Right ventricle myocardium superior (tissue), 1 donor: ENCODE measurements at regions of chr2 and their contacts with region 1.

Region 1: GRCh38 chr2:200703127-200703925 is 108.4 kb upstream of the BZW1 start:
- DNase-seq: no peak
- ATAC-seq: peak; percentile 66

Region 2: GRCh38 chr2:200156166-200156835 is 547.0 kb before region 1 on chr2:
- intact Hi-C with region 1: no loop called
- DNase-seq: peak; percentile 43
- ATAC-seq: peak; percentile 91

Region 3: GRCh38 chr2:200578778-200579177 is 124.5 kb before region 1 on chr2:
- intact Hi-C with region 1: loop called (anchors 5 kb)
- DNase-seq: no peak
- ATAC-seq: no peak

Region 4: DNA sequence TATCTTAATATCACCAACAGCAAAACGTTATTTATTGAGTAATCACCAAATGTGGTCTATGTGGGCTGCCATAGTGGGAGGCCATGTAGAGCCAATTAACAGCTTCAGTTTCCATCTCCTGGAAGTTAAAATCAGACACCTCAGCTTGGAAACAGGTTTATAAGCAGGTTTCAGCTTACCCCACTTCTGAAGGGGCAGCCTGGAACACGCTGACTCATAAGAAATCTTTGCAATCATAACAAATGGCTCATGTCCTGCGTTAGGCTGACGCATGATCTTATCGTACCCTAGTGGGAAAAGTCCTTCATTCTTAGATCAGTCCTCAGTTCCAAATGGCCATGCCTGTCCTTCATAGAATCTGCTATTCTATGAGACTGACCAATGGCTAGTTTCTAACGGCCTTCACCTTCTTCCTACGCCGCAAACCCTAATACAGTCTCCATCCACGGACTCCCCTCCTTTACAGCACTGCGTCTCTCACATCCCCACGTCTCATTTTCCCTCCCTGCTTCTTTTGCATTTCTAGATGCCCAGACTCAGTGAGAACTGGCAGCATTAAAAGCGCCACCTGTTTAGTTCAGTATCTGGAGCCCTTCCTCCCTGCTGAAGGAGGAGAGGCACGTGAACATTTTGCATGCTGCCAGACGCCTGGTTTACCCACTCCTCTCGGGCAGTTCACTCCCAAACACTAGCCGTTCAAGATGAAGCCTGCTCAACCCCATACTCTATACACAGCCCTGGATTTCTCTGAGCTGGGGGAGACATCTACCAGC is 84.2 kb after region 1 on chr2:
- intact Hi-C with region 1: no loop called
- DNase-seq: no peak
- ATAC-seq: peak; percentile 73